ENCODE measurements at regions of chr1 and their contacts with region 1.

Region 1: GRCh38 chr1:40849801-40850592 is 12.2 kb downstream of the CITED4 start:
- DNase-seq: peak; percentile 78
- H3K4me3 Mint-ChIP-seq: no peak overlapping the region
- H3K27ac Mint-ChIP-seq: no peak overlapping the region
- H3K4me1 Mint-ChIP-seq: peaks cover 19% of the 10 kb centered on the region
- H3K27me3 Mint-ChIP-seq: no peaks in the 10 kb centered on the region
- CTCF ChIP-seq: peak; percentile 88

Region 2: GRCh38 chr1:40774266-40774998 is 75.6 kb before region 1 on chr1:
- CTCF ChIA-PET with region 1: interaction called, 8 read pairs
- intact Hi-C with region 1: loop called (anchors 10 kb)
- DNase-seq: peak; percentile 77
- H3K4me3 Mint-ChIP-seq: no peak overlapping the region
- H3K27ac Mint-ChIP-seq: no peak overlapping the region
- H3K4me1 Mint-ChIP-seq: peaks cover 5% of the 10 kb centered on the region
- H3K27me3 Mint-ChIP-seq: no peaks in the 10 kb centered on the region
- CTCF ChIP-seq: peak; percentile 88

Region 3: DNA sequence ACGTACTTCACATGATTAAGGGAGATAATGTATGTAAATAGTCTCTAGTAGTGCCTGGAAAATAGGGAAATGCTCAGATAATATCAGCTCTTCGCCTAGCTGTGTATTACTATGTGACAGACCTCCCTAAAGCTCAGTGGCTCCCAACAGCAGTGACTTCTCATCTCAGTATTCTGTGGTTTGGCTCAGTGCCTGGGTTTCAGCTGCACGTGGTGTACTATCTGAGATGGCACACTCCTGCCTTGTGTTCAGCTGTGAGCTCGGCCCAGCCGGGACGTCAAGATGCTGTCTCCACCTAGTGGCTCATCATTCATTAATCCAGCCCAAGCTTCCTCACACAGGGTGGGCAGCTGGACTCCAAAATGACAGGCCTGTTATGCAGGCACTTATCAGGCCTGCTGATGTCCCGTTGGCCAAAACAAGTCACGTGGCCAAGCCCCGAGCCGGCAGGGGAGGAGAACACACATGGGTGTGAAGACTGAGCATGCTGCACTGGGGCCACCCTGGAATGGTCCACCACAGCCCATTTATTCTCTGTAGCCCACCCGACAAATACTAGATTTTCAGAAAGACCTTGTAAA is 153.7 kb after region 1 on chr1:
- CTCF ChIA-PET with region 1: interaction called, 13 read pairs
- intact Hi-C with region 1: loop called (anchors 1 kb)
- DNase-seq: peak; percentile 91
- H3K4me3 Mint-ChIP-seq: no peak overlapping the region
- H3K27ac Mint-ChIP-seq: no peak overlapping the region
- H3K4me1 Mint-ChIP-seq: peaks cover 22% of the 10 kb centered on the region
- H3K27me3 Mint-ChIP-seq: no peaks in the 10 kb centered on the region
- CTCF ChIP-seq: peak; percentile 24